PC-3 (cell line): ENCODE measurements at regions of chr2 and their contacts with region 1.

Region 1: GRCh38 chr2:178579006-178579405 is 98.7 kb downstream of the PLEKHA3 start:
- DNase-seq: peak; percentile 87
- ATAC-seq: peak; percentile 94
- H3K4me3 ChIP-seq: no peak overlapping the region
- H3K27ac ChIP-seq: no peak overlapping the region
- H3K4me1 ChIP-seq: peaks cover 13% of the 10 kb centered on the region
- H3K27me3 ChIP-seq: no peaks in the 10 kb centered on the region
- CTCF ChIP-seq: no peak

Region 2: DNA sequence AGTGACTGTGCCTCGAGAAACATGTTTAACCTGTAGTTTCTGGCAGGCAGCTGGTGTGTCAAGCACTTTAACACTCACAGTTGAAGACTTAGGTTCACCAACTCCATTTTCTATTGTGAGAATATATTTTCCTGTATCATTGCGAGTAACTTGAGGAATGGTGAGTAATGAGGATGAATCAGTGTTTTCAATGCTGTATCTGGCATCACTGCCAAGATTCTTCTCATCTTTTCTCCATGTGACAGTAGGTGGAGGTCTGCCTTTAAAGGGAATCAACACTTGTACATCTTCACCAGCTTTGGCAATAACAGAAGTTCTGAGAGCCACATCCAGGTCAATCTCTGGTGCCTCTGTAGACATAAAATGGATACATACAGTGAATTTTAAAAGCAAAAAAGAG is 26.0 kb before region 1 on chr2:
- CTCF ChIA-PET with region 1: no interaction called
- POLR2A ChIA-PET with region 1: no interaction called
- intact Hi-C with region 1: loop called (anchors 1 kb)
- DNase-seq: peak; percentile 86
- ATAC-seq: peak; percentile 94
- H3K4me3 ChIP-seq: no peak overlapping the region
- H3K27ac ChIP-seq: peak overlapping the region; percentile 33
- H3K4me1 ChIP-seq: peaks cover 14% of the 10 kb centered on the region
- H3K27me3 ChIP-seq: no peaks in the 10 kb centered on the region
- CTCF ChIP-seq: no peak

Region 3: GRCh38 chr2:178707476-178707875 is 128.5 kb after region 1 on chr2:
- CTCF ChIA-PET with region 1: no interaction called
- POLR2A ChIA-PET with region 1: no interaction called
- intact Hi-C with region 1: no loop called
- DNase-seq: no peak
- ATAC-seq: no peak
- H3K4me3 ChIP-seq: no peak overlapping the region
- H3K27ac ChIP-seq: no peak overlapping the region
- H3K4me1 ChIP-seq: no peaks in the 10 kb centered on the region
- H3K27me3 ChIP-seq: peaks cover 82% of the 10 kb centered on the region
- CTCF ChIP-seq: no peak